CD4-positive, alpha-beta T cell (primary cell): ENCODE measurements at regions of chr3 and their contacts with region 1.

Region 1: GRCh38 chr3:160842021-160843005 is 86.3 kb downstream of the PPM1L start:
- DNase-seq: no peak
- ATAC-seq: no peak
- H3K4me3 ChIP-seq: no peak overlapping the region
- H3K4me3 Mint-ChIP-seq: no peak overlapping the region
- H3K27ac ChIP-seq: no peak overlapping the region
- H3K27ac Mint-ChIP-seq: no peak overlapping the region
- H3K4me1 ChIP-seq: no peaks in the 10 kb centered on the region
- H3K4me1 Mint-ChIP-seq: no peaks in the 10 kb centered on the region
- H3K27me3 ChIP-seq: no peaks in the 10 kb centered on the region
- H3K27me3 Mint-ChIP-seq: no peaks in the 10 kb centered on the region
- CTCF ChIP-seq: no peak

Region 2: GRCh38 chr3:160607826-160608225 is 234.5 kb before region 1 on chr3:
- CTCF ChIA-PET with region 1: no interaction called
- POLR2A ChIA-PET with region 1: no interaction called
- intact Hi-C with region 1: no loop called
- DNase-seq: no peak
- ATAC-seq: no peak
- H3K4me3 ChIP-seq: no peak overlapping the region
- H3K4me3 Mint-ChIP-seq: no peak overlapping the region
- H3K27ac ChIP-seq: no peak overlapping the region
- H3K27ac Mint-ChIP-seq: no peak overlapping the region
- H3K4me1 ChIP-seq: no peaks in the 10 kb centered on the region
- H3K4me1 Mint-ChIP-seq: no peaks in the 10 kb centered on the region
- H3K27me3 ChIP-seq: no peaks in the 10 kb centered on the region
- H3K27me3 Mint-ChIP-seq: peaks cover 4% of the 10 kb centered on the region
- CTCF ChIP-seq: no peak

Region 3: DNA sequence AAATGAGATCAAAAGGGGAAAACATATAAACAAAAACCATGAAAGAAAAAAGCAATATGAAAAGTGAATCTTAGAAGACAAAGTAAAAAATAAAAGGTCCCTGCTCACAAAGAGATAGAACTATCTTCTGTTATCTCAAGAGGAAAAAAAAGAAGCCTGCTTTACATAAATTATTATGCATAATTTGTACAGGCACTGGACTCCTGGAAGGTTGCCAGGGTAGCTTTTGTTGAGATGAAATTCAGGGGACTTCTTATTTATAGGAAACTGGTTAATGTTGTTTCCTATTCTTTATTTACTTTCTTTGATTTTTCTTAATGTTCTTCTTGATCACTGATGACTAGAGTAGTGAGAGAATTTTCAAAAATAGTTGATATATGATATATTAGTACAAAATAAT is 19.4 kb before region 1 on chr3:
- CTCF ChIA-PET with region 1: no interaction called
- POLR2A ChIA-PET with region 1: no interaction called
- intact Hi-C with region 1: no loop called
- DNase-seq: no peak
- ATAC-seq: no peak
- H3K4me3 ChIP-seq: no peak overlapping the region
- H3K4me3 Mint-ChIP-seq: no peak overlapping the region
- H3K27ac ChIP-seq: no peak overlapping the region
- H3K27ac Mint-ChIP-seq: no peak overlapping the region
- H3K4me1 ChIP-seq: no peaks in the 10 kb centered on the region
- H3K4me1 Mint-ChIP-seq: no peaks in the 10 kb centered on the region
- H3K27me3 ChIP-seq: no peaks in the 10 kb centered on the region
- H3K27me3 Mint-ChIP-seq: no peaks in the 10 kb centered on the region
- CTCF ChIP-seq: no peak

Region 4: DNA sequence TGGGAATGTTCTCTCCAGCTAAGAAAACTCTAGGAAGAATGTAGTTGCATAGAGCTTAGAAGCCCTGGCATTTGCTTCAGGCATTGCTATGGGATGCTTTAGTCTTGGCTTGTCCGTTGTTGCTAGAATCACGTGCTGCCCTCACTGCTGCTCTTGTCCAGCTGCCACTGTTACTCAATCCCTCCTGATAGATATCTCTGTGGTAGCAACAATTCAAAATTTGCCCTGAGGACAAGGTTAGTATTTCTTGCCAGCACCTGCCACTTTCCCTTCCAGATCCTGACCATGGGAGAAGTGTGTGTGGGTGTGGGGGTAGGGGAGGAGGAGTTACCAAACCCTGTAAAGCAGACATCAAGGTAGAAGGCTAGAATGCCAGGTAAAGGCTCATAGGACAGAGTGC is 27.5 kb after region 1 on chr3:
- CTCF ChIA-PET with region 1: no interaction called
- POLR2A ChIA-PET with region 1: no interaction called
- intact Hi-C with region 1: loop called in 1 of 2 experiments (anchors 1 kb)
- DNase-seq: no peak
- ATAC-seq: no peak
- H3K4me3 ChIP-seq: no peak overlapping the region
- H3K4me3 Mint-ChIP-seq: no peak overlapping the region
- H3K27ac ChIP-seq: no peak overlapping the region
- H3K27ac Mint-ChIP-seq: no peak overlapping the region
- H3K4me1 ChIP-seq: no peaks in the 10 kb centered on the region
- H3K4me1 Mint-ChIP-seq: no peaks in the 10 kb centered on the region
- H3K27me3 ChIP-seq: no peaks in the 10 kb centered on the region
- H3K27me3 Mint-ChIP-seq: peaks cover 4% of the 10 kb centered on the region
- CTCF ChIP-seq: no peak

Region 5: DNA sequence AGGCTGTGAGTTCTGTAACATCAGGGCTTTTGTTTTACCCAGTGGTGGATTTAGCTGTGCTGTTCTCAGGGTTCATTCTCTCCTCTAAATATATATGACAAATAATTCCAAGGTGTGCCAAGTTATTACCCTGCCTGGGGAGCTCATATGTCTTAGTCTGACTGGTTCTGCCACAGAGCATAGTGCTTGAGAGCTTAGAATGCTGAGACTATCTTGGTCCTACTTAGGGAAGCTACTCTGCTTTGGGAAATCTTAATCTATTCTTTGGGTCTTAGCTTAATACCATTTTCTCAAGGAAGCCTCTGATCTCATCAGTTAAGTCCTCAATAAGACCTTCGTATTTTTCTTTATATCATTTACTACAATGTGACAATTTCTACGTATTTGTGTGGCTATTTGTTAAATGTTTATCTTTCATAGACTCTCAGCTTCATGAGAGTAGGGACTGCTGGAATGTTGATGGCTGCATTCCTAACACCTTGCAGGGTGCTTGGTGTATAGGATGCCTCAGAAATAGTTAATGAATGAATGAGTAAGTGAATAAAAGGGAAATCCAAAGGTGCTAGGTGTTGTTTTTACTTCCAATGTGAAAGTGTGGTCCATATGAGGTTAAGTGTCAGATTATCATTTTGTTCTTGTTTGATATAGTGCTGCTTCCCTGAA is 656.1 kb after region 1 on chr3:
- CTCF ChIA-PET with region 1: no interaction called
- POLR2A ChIA-PET with region 1: no interaction called
- intact Hi-C with region 1: no loop called
- DNase-seq: no peak
- ATAC-seq: no peak
- H3K4me3 ChIP-seq: no peak overlapping the region
- H3K4me3 Mint-ChIP-seq: no peak overlapping the region
- H3K27ac ChIP-seq: no peak overlapping the region
- H3K27ac Mint-ChIP-seq: no peak overlapping the region
- H3K4me1 ChIP-seq: no peaks in the 10 kb centered on the region
- H3K4me1 Mint-ChIP-seq: no peaks in the 10 kb centered on the region
- H3K27me3 ChIP-seq: peaks cover 0 to under 1% of the 10 kb centered on the region in 2 experiments
- H3K27me3 Mint-ChIP-seq: peaks cover 13% of the 10 kb centered on the region
- CTCF ChIP-seq: no peak